ENCODE measurements at regions of chr11 and their contacts with region 1.

Region 1: GRCh38 chr11:100984668-100985067 is 144.9 kb downstream of the PGR start:
- DNase-seq: no peak
- ATAC-seq: no peak
- H3K4me3 ChIP-seq: no peak overlapping the region
- H3K4me3 Mint-ChIP-seq: no peak overlapping the region
- H3K27ac ChIP-seq: no peak overlapping the region
- H3K27ac Mint-ChIP-seq: no peak overlapping the region
- H3K4me1 ChIP-seq: no peaks in the 10 kb centered on the region
- H3K4me1 Mint-ChIP-seq: no peaks in the 10 kb centered on the region
- H3K27me3 ChIP-seq: no peaks in the 10 kb centered on the region
- H3K27me3 Mint-ChIP-seq: no peaks in the 10 kb centered on the region
- CTCF ChIP-seq: no peak

Region 2: DNA sequence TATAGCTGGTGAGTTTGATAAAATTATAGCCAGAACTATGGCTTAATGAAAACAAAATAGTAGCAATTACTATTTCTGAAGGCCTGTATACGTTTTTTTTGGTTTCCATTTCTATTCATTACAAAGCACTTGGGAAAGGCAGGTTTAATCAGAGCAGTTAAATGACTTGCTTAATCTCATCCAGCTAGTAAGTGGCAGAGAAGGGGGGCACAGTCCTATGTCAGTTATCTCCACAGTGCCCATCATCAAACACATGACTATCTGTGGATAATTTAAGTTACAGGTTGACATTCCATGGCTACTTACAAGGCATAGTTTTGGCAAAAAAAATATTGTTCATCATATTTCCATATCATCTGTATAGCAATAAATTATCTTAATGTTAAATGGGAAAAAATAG is 51.2 kb after region 1 on chr11:
- CTCF ChIA-PET with region 1: no interaction called
- POLR2A ChIA-PET with region 1: no interaction called
- intact Hi-C with region 1: loop called in 1 of 2 experiments (anchors 5 kb)
- DNase-seq: no peak
- ATAC-seq: no peak
- H3K4me3 ChIP-seq: no peak overlapping the region
- H3K4me3 Mint-ChIP-seq: no peak overlapping the region
- H3K27ac ChIP-seq: no peak overlapping the region
- H3K27ac Mint-ChIP-seq: no peak overlapping the region
- H3K4me1 ChIP-seq: no peaks in the 10 kb centered on the region
- H3K4me1 Mint-ChIP-seq: no peaks in the 10 kb centered on the region
- H3K27me3 ChIP-seq: no peaks in the 10 kb centered on the region
- H3K27me3 Mint-ChIP-seq: no peaks in the 10 kb centered on the region
- CTCF ChIP-seq: no peak

Measured in CD8-positive, alpha-beta T cell (primary cell).